AG04450 (cell line): ENCODE measurements at regions of chr2 and their contacts with region 1.

Region 1: GRCh38 chr2:71995067-71995665 is 152.5 kb downstream of the CYP26B1 start:
- DNase-seq: no peak
- H3K4me3 ChIP-seq: no peak overlapping the region
- H3K27ac ChIP-seq: no peak overlapping the region
- H3K27me3 ChIP-seq: peaks cover 2% of the 10 kb centered on the region
- CTCF ChIP-seq: peak; percentile 44

Region 2: GRCh38 chr2:71609958-71610357 is 385.2 kb before region 1 on chr2:
- CTCF ChIA-PET with region 1: interaction called, 11 read pairs
- POLR2A ChIA-PET with region 1: no interaction called
- DNase-seq: no peak
- H3K4me3 ChIP-seq: no peak overlapping the region
- H3K27ac ChIP-seq: no peak overlapping the region
- H3K27me3 ChIP-seq: peaks cover 31% of the 10 kb centered on the region
- CTCF ChIP-seq: peak; percentile 33

Region 3: DNA sequence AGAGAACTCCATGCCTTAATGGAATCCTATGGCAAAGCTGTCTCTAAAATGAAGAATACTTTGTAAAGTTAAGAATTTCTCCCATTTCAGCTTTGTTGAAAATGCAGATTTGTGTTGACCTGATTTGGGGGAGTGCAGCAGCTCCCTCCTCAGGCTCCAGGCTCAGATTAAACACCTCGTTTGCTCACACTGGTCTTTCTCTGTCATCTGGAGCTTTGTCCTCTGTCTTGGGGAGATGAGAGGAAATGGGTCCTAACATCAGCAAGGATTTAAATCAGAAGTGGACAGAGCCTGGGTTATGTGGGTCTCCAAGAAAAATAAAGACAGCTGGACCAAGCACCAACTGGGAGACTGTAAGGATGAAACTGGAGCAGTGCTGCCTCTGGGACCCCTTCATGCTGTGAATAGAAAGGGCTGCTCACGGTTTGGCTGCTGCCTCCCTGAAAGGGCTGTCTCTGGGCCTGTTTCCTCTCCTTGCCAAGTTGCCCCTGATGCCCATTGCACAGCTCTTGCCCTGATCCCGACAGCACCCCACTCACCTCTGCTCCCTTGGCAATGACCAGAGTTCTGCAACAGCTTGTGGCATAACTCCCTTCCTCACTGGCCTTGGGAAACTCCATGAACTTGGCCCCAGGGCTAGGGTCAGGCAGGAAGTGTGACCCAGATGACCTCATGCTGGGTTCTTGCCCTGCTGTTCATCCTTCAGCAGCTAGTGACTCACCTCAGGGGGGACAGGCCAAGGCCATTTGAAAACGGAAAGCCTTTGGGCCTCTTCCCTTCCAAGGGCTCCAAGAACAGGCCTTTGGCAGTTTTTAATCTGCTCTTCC is 44.7 kb before region 1 on chr2:
- CTCF ChIA-PET with region 1: no interaction called
- POLR2A ChIA-PET with region 1: no interaction called
- DNase-seq: no peak
- H3K4me3 ChIP-seq: no peak overlapping the region
- H3K27ac ChIP-seq: no peak overlapping the region
- H3K27me3 ChIP-seq: peaks cover 4% of the 10 kb centered on the region
- CTCF ChIP-seq: no peak